CD4-positive, alpha-beta T cell (primary cell): ENCODE measurements at regions of chr11 and their contacts with region 1.

Region 1: DNA sequence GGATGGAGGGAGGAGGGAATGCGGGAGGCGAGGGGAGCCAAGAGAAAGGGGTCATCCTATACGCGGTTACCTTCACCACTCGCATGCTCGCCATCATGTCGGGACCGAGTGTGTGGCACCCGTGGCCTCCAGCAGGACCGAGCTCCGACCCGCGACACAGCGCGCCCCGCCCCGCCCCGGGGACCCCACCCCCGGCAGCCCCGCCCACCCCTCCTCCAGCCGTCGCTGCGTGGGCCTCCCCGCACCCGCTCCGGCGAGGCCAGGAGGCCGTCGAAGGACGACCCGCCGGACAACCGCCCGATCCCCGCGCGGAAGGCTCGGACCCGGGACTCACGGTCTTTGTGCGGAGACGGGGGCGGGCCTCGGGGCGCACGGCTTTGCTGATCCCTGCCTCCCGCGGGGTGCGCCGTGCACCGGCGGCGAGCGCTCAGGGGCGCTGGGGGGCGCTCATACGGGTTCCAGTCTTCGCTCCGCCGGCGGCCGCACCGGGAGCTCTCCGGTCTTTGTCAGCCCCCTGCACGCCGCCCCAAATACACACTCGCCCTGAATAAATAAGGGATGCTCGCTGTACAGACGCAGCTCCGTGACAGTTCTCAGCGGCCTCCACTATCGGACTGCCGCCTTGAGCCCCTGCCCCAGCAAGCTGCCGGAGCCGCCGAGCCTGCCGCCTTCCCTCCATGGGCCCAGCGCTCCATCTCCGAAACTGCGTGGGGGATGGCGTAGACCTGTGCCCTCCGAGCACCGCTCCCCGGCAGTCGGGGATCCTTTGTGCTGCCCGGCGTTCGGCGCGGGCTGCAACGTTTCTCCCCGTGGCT is at the start of gene UBE2L6:
- DNase-seq: peak; percentile 35 to 94 (median 74)
- ATAC-seq: peak; percentile 76
- H3K4me3 ChIP-seq: peak within 1 kb of the TSS; percentile 95
- H3K4me3 Mint-ChIP-seq: peak within 1 kb of the TSS; percentile 100
- H3K27ac ChIP-seq: peak within 1 kb of the TSS; percentile 80 to 82
- H3K27ac Mint-ChIP-seq: peak within 1 kb of the TSS; percentile 92
- H3K4me1 ChIP-seq: peaks cover 33% of the 10 kb centered on the region
- H3K4me1 Mint-ChIP-seq: peaks cover 53% of the 10 kb centered on the region
- H3K27me3 ChIP-seq: no peaks in the 10 kb centered on the region
- H3K27me3 Mint-ChIP-seq: no peaks in the 10 kb centered on the region
- CTCF ChIP-seq: no peak
- total RNA-seq, gene UBE2L6: 35.0 to 36.2 TPM

Region 2: DNA sequence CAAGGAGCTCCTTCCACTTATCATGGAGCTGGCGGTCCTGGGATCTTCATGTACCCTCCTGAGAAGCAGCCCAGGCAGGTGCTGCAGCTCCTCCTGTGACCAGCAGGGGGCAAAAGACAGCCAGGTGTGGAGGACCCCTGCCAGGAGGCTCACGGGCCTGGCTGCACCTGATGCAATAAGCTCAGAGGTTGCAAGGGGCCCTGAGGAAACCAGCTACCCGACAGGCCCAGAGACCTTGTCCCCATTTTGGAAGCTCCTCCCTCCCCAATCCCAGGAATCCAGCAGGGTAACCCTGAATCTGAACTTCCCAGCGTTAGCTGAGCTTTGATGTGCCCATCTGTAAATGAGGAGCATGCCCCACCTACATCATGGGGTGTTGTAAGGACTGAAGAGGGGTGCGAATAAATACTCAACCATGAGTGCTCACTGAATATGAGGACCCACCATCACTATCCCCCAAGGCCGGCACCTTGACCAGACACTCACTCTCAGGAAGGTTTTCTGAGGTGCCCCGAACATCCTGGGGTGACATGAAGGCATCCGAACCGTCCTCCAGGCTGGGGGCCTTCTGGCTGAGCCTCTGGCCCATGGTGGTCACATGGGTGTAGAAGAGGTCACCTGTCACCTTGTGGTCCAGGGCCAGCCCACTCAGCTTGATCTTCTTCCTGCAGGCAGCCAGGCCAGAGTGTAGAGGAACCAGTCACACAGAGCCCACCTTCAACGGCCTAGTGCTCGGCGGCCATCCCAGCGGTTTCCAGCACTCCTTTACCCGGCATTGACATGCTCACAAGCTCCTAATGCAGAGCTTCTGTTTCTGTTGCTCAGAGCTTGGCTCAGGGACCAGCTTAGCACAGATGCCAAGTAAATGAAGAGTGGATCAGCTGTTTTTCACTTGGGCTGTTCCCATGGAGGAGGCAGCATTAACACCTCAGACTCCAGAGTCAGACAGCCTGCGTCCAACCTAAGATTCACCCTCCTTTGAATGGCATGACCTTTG is 73.9 kb before region 1 on chr11:
- CTCF ChIA-PET with region 1: interaction called, 3 read pairs
- POLR2A ChIA-PET with region 1: interaction called, 4 read pairs
- intact Hi-C with region 1: loop called in 1 of 2 experiments (anchors 5 kb)
- DNase-seq: peak; percentile 63 to 84 (median 69)
- ATAC-seq: peak; percentile 94
- H3K4me3 ChIP-seq: no peak overlapping the region
- H3K4me3 Mint-ChIP-seq: no peak overlapping the region
- H3K27ac ChIP-seq: no peak overlapping the region
- H3K27ac Mint-ChIP-seq: no peak overlapping the region
- H3K4me1 ChIP-seq: peaks cover 4% of the 10 kb centered on the region
- H3K4me1 Mint-ChIP-seq: no peaks in the 10 kb centered on the region
- H3K27me3 ChIP-seq: no peaks in the 10 kb centered on the region
- H3K27me3 Mint-ChIP-seq: no peaks in the 10 kb centered on the region
- CTCF ChIP-seq: peak; percentile 97

Region 3: DNA sequence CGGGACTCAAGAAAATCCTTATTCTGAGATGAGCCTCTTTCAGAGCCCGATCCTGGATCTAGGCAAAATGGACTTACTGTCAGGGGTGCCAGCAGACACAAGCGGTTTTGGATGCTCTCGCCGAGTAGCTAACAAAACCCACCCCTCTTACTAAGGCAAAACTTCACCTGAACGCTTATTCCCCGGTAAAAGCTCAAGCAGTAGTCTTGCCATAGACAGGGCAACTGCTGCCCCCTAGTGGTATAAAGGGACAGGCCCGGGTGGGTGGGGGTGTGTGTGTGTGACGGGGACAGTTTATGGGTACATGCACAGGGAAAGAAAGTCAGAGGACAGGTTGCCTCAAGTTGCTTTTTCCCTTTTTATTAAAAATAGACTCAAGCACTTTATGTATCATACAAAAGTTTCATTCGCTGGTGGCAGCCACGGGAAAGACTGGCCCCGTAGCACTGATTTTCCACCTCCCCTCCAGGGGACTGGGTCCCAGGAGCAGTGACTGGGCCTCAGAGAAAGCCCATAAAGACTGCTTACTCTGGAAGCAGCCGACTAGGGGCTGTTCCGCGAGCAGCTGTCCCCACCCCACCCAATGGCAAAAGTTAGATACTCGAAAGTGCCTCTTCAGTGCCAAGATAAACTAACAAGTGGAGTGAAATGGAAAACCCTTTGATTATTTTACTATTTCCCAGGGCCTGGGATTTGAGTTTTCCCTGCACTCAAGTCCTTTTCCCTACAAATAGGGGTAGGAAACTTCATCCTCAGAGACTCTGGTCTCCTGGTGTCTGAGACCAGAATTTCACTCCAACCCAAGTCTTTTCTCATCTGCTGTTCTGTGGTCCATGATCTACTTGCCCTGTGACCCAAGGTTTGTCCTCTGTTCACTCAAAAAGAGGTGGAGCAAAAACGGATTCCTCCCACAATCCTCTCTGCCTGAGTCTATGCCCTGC is 77.3 kb after region 1 on chr11:
- CTCF ChIA-PET with region 1: interaction called, 47 read pairs
- POLR2A ChIA-PET with region 1: interaction called, 34 read pairs
- intact Hi-C with region 1: loop called (anchors 1 kb)
- DNase-seq: peak; percentile 73 to 90 (median 86)
- ATAC-seq: peak; percentile 68
- H3K4me3 ChIP-seq: no peak overlapping the region
- H3K4me3 Mint-ChIP-seq: no peak overlapping the region
- H3K27ac ChIP-seq: no peak overlapping the region
- H3K27ac Mint-ChIP-seq: no peak overlapping the region
- H3K4me1 ChIP-seq: peaks cover 42% of the 10 kb centered on the region
- H3K4me1 Mint-ChIP-seq: peaks cover 50% of the 10 kb centered on the region
- H3K27me3 ChIP-seq: peaks cover 48 to 50% of the 10 kb centered on the region in 2 experiments
- H3K27me3 Mint-ChIP-seq: peaks cover 64% of the 10 kb centered on the region
- CTCF ChIP-seq: peak; percentile 71

Region 4: DNA sequence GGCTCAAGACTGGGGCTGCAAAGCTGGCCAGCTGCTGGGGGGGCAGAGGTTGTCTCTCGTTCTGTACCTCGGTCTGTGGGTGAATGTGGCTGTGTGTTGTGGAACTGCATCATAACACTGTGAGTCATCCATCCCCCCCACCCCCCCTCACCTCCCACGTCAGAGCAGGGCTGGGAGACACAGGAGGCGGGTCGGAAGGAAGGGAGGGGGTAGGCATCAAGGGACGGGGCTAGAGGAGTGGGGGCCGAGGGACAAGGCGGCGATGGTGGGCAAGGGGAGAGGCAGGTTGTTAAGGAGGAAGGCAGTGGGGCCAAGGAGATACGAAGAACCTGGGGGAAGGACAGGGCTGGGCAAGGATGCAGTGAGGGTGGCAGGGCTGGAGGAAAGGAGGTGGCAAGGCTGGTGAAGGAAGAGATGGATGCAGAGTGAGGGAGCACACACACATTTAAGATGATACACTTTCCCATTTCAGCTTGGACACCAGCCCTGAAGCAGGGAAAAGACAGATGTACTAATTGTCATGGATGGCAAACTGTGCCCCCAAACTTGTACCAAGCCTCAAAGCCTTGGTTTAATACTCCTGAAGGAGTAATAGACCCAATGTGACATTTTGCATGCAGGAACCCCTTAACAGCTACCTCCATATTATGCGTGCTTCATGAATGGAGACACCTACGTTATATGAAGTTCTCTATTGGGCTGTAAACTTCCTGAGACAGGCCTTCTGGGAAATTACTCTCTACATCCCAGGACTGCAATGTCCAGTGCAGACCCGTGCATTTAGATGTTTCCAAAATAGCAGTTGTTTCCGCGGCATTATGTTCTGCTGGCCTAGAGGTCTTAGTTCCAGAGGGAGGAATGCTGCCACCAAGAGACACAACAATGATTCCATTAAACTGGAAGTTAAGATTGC is 82.4 kb after region 1 on chr11 and contains the start of gene YPEL4:
- CTCF ChIA-PET with region 1: interaction called, 33 read pairs
- POLR2A ChIA-PET with region 1: interaction called, 13 read pairs
- intact Hi-C with region 1: loop called in 1 of 2 experiments (anchors 1 kb)
- DNase-seq: peak; percentile 51 to 92 (median 68)
- ATAC-seq: peak; percentile 83
- H3K4me3 ChIP-seq: peak within 1 kb of the TSS; percentile 53
- H3K4me3 Mint-ChIP-seq: peak within 1 kb of the TSS; percentile 87
- H3K27ac ChIP-seq: no peak within 1 kb of the TSS
- H3K27ac Mint-ChIP-seq: peak within 1 kb of the TSS; percentile 83
- H3K4me1 ChIP-seq: peaks cover 44% of the 10 kb centered on the region
- H3K4me1 Mint-ChIP-seq: peaks cover 49% of the 10 kb centered on the region
- H3K27me3 ChIP-seq: peaks cover 42 to 44% of the 10 kb centered on the region in 2 experiments
- H3K27me3 Mint-ChIP-seq: peaks cover 55% of the 10 kb centered on the region
- CTCF ChIP-seq: no peak
- total RNA-seq, gene YPEL4: 5.6 to 7.3 TPM

Region 5: DNA sequence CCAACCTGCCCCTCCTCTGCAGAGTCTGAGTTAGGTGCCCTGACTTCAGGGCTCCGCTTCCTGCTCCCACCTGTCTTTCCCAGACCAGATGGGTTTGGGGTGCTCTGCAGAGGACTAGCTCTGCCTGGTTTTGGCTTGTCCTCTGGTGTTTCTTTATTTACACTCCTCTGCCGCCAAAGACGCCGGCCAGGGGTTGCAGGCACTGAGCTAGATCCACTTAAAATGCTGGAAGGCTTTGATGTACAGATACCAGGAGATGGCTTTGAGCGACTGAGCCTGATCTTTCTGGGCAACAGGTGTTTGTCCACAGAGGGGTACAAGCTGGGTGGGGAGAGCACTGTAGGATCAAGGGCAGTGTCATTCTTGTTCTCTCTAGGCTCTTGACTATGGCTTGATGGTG is 177.5 kb after region 1 on chr11:
- CTCF ChIA-PET with region 1: no interaction called
- POLR2A ChIA-PET with region 1: no interaction called
- intact Hi-C with region 1: no loop called
- DNase-seq: no peak
- ATAC-seq: no peak
- H3K4me3 ChIP-seq: no peak overlapping the region
- H3K4me3 Mint-ChIP-seq: peak overlapping the region; percentile 46
- H3K27ac ChIP-seq: no peak overlapping the region
- H3K27ac Mint-ChIP-seq: peak overlapping the region; percentile 80
- H3K4me1 ChIP-seq: peaks cover 31% of the 10 kb centered on the region
- H3K4me1 Mint-ChIP-seq: peaks cover 44% of the 10 kb centered on the region
- H3K27me3 ChIP-seq: no peaks in the 10 kb centered on the region
- H3K27me3 Mint-ChIP-seq: no peaks in the 10 kb centered on the region
- CTCF ChIP-seq: no peak

Region 6: DNA sequence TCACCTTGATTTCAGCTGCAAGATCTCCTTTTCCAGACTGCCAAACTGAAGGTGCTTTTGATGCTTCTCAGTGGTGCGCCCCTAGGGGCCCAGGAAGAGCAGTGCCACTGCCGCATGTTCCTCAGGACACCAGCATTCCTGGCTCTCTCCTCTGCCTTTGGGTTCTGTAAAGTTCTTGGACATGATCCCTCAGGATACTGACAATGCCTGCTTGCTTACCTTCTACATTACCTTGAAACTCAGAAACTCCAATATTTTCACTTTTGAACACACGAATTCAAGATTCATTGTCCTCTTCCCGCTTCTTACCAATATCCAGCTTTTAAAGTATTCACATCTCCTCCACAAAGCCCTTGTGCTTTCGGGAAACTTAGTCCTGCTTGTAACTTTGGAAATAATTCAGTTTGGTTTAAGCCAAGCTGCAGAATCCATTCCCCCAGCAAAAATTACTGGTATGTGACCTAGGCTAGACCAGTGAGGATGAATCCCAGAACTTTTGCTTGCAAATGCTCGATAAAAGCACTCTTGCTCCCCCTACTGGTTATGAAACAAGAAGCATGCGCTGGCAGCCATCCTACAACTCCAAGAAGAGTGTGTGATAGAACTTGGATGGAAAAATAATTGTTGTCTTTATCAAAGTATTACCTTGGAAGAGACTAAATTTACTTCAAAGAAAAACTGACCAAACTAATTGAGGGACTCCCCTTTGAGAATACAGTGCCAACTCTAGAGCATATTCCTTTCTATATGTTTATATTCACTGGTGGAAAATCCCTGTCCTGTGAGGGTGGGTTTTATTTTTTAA is 956.7 kb after region 1 on chr11:
- CTCF ChIA-PET with region 1: no interaction called
- POLR2A ChIA-PET with region 1: no interaction called
- intact Hi-C with region 1: loop called (anchors 1 to 10 kb)
- DNase-seq: peak in 13 of 14 experiments; percentile 16 to 84 (median 35)
- ATAC-seq: peak; percentile 65
- H3K4me3 ChIP-seq: peak overlapping the region; percentile 39
- H3K4me3 Mint-ChIP-seq: peak overlapping the region; percentile 63
- H3K27ac ChIP-seq: peak overlapping the region; percentile 50 to 83
- H3K27ac Mint-ChIP-seq: peak overlapping the region; percentile 95
- H3K4me1 ChIP-seq: peaks cover 17% of the 10 kb centered on the region
- H3K4me1 Mint-ChIP-seq: peaks cover 78% of the 10 kb centered on the region
- H3K27me3 ChIP-seq: no peaks in the 10 kb centered on the region
- H3K27me3 Mint-ChIP-seq: no peaks in the 10 kb centered on the region
- CTCF ChIP-seq: peak; percentile 93